B cell (primary cell): ENCODE measurements at regions of chr4 and their contacts with region 1.

Region 1: GRCh38 chr4:36244257-36245079 is at the start of gene ARAP2:
- DNase-seq: peak; percentile 88
- ATAC-seq: peak; percentile 81
- H3K4me3 ChIP-seq: peak within 1 kb of the TSS; percentile 79 to 96 (median 87)
- H3K4me3 Mint-ChIP-seq: peak within 1 kb of the TSS; percentile 96
- H3K27ac ChIP-seq: peak within 1 kb of the TSS; percentile 93 to 96
- H3K27ac Mint-ChIP-seq: peak within 1 kb of the TSS; percentile 95
- H3K4me1 ChIP-seq: peaks cover 18 to 22% of the 10 kb centered on the region in 2 donors
- H3K4me1 Mint-ChIP-seq: peaks cover 41% of the 10 kb centered on the region
- H3K27me3 ChIP-seq: no peaks in the 10 kb centered on the region
- H3K27me3 Mint-ChIP-seq: no peaks in the 10 kb centered on the region
- CTCF ChIP-seq: no peak
- total RNA-seq, gene ARAP2: 88.0 and 89.0 TPM in 2 replicates

Region 2: DNA sequence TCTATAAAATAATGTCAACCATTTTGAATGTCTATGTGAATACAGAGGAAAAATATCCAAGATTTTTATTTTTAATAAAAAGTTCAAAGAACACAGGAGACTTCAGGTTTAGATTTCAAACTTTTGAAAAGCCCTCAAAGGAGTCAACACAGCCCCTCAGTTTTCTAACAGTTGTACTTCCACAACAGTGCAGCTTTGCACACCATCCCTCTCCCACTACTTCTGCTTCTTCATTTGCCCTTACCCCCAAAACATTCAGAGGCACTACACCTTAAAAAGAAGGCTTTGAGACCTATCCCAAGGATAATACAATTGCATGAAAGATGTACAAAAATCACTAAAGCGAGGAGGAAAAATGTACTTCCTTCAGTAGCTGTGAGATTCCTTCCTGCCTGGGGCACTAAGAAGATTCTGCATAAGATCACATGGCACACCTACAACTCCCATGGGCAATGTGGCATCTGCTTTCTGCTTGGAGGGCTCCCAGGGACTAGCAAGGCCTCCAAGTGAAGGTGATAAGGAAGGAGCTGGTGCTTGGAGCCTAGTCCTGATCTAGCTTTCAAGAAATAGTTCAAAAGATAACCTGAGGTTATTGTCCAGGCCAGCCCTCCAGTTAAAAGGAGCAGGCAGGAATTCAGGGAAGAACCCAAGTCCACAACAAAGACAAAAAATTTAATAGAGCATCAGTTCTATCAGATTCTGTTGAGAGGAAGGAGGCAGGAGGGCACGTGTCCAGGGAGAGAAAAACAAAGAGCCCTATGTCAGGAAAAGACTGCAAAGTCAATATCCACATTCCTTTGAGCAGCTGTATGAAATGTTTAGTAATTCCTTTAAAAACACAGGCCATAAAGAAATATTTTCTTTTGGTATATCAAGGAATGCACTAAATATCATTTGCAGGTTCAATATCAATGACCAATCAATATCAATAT is 19.2 kb before region 1 on chr4:
- CTCF ChIA-PET with region 1: interaction called, 4 read pairs
- POLR2A ChIA-PET with region 1: no interaction called
- intact Hi-C with region 1: loop called (anchors 1 kb)
- DNase-seq: peak; percentile 36
- ATAC-seq: peak; percentile 64
- H3K4me3 ChIP-seq: no peak overlapping the region
- H3K4me3 Mint-ChIP-seq: peak overlapping the region; percentile 35
- H3K27ac ChIP-seq: peak overlapping the region; percentile 27 to 42
- H3K27ac Mint-ChIP-seq: peak overlapping the region; percentile 80
- H3K4me1 ChIP-seq: peaks cover 10 to 14% of the 10 kb centered on the region in 2 donors
- H3K4me1 Mint-ChIP-seq: peaks cover 57% of the 10 kb centered on the region
- H3K27me3 ChIP-seq: no peaks in the 10 kb centered on the region
- H3K27me3 Mint-ChIP-seq: no peaks in the 10 kb centered on the region
- CTCF ChIP-seq: no peak

Region 3: GRCh38 chr4:36255577-36255976 is 11.1 kb after region 1 on chr4:
- CTCF ChIA-PET with region 1: interaction called, 34 read pairs
- POLR2A ChIA-PET with region 1: interaction called, 16 read pairs
- intact Hi-C with region 1: loop called (anchors 1 kb)
- DNase-seq: peak; percentile 76
- ATAC-seq: peak; percentile 92
- H3K4me3 ChIP-seq: peak overlapping the region in 4 of 5 experiments; percentile 15 to 61 (median 18)
- H3K4me3 Mint-ChIP-seq: peak overlapping the region; percentile 78
- H3K27ac ChIP-seq: peak overlapping the region; percentile 13 to 80
- H3K27ac Mint-ChIP-seq: peak overlapping the region; percentile 93
- H3K4me1 ChIP-seq: peaks cover 22 to 26% of the 10 kb centered on the region in 2 donors
- H3K4me1 Mint-ChIP-seq: peaks cover 32% of the 10 kb centered on the region
- H3K27me3 ChIP-seq: no peaks in the 10 kb centered on the region
- H3K27me3 Mint-ChIP-seq: no peaks in the 10 kb centered on the region
- CTCF ChIP-seq: no peak

Region 4: GRCh38 chr4:36285784-36286480 is 41.5 kb after region 1 on chr4:
- CTCF ChIA-PET with region 1: no interaction called
- POLR2A ChIA-PET with region 1: no interaction called
- intact Hi-C with region 1: loop called (anchors 5 kb)
- DNase-seq: peak; percentile 43
- ATAC-seq: peak; percentile 96
- H3K4me3 ChIP-seq: peak overlapping the region in 1 of 5 experiments; percentile 1
- H3K4me3 Mint-ChIP-seq: peak overlapping the region; percentile 38
- H3K27ac ChIP-seq: no peak overlapping the region
- H3K27ac Mint-ChIP-seq: peak overlapping the region; percentile 43
- H3K4me1 ChIP-seq: peaks cover 4 to 9% of the 10 kb centered on the region in 2 donors
- H3K4me1 Mint-ChIP-seq: peaks cover 17% of the 10 kb centered on the region
- H3K27me3 ChIP-seq: peaks cover 0 to 4% (median 0%) of the 10 kb centered on the region in 4 experiments
- H3K27me3 Mint-ChIP-seq: no peaks in the 10 kb centered on the region
- CTCF ChIP-seq: no peak

Region 5: DNA sequence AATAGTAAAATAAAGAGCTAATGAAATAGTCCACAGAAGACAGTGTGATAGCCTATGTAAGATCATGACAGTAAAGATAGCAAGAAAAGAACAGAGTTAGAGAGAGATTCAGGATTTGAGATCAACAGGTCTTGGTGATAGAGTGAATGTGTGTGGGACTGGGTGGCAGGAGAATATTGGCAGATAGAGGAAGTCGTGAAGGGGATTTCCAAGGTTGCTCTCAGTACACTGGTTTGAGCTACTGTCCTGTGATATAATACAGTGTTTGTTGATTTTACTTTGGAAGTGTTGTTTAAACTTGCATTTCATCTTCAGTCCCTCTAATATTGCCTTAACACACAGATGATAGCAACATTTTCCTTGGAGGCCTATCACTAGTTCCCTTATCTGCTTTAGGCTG is 81.0 kb after region 1 on chr4:
- CTCF ChIA-PET with region 1: interaction called, 9 read pairs
- POLR2A ChIA-PET with region 1: interaction called, 8 read pairs
- intact Hi-C with region 1: loop called (anchors 2 kb)
- DNase-seq: peak; percentile 81
- ATAC-seq: peak; percentile 89
- H3K4me3 ChIP-seq: peak overlapping the region in 2 of 5 experiments; percentile 7 to 44
- H3K4me3 Mint-ChIP-seq: peak overlapping the region; percentile 69
- H3K27ac ChIP-seq: peak overlapping the region; percentile 76 to 85
- H3K27ac Mint-ChIP-seq: peak overlapping the region; percentile 90
- H3K4me1 ChIP-seq: peaks cover 44 to 49% of the 10 kb centered on the region in 2 donors
- H3K4me1 Mint-ChIP-seq: peaks cover 68% of the 10 kb centered on the region
- H3K27me3 ChIP-seq: no peaks in the 10 kb centered on the region
- H3K27me3 Mint-ChIP-seq: no peaks in the 10 kb centered on the region
- CTCF ChIP-seq: no peak

Region 6: GRCh38 chr4:36351082-36351666 is 106.7 kb after region 1 on chr4:
- CTCF ChIA-PET with region 1: interaction called, 29 read pairs
- POLR2A ChIA-PET with region 1: interaction called, 3 read pairs
- intact Hi-C with region 1: loop called (anchors 1 kb)
- DNase-seq: peak; percentile 77
- ATAC-seq: peak; percentile 53
- H3K4me3 ChIP-seq: no peak overlapping the region
- H3K4me3 Mint-ChIP-seq: no peak overlapping the region
- H3K27ac ChIP-seq: no peak overlapping the region
- H3K27ac Mint-ChIP-seq: no peak overlapping the region
- H3K4me1 ChIP-seq: peaks cover 15 to 19% of the 10 kb centered on the region in 2 donors
- H3K4me1 Mint-ChIP-seq: peaks cover 21% of the 10 kb centered on the region
- H3K27me3 ChIP-seq: no peaks in the 10 kb centered on the region
- H3K27me3 Mint-ChIP-seq: peaks cover 3% of the 10 kb centered on the region
- CTCF ChIP-seq: peak; percentile 91

Region 7: DNA sequence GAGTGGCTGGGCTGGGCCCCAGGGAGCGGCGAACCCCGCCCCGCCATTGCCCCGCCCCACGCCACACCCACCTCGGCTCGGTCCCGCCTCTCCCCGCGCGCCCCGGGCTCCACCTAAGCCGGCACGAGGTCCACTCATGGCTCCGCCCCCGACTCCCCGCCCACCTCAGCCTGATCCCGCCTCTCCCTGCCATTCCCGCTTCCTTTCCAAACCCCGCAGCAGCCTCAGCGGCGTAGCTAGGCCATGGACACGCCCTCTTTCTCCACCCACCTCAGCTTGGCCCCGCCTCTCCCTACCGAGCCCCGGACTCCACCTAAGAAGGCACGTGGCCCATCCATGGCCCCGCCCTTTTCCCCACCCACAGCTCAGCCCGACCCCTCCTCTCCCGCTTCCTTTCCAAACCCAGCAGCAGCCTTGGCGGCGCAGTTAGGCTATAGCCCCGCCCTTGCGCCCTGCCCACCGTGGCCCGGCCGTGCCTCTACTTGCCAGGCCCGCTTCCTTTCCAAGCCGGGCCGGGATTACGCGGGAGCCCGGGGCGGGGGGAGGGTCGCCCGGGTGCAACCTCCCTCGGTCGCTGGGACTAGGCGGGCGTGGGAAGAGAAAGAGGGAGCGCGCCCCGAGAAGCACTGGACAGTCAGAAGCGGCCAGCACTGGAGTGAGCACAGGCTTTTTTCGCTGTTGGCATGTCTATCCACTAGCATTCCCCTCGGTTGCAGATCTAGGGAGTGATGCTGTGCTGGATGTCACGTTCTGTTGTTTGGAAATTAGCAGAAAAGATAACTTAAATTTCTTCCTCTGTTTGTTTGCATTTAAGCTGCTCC is 1442.1 kb after region 1 on chr4 and contains the start of gene RELL1:
- CTCF ChIA-PET with region 1: no interaction called
- POLR2A ChIA-PET with region 1: no interaction called
- intact Hi-C with region 1: loop called (anchors 10 kb)
- DNase-seq: peak; percentile 96
- ATAC-seq: peak; percentile 85
- H3K4me3 ChIP-seq: peak within 1 kb of the TSS; percentile 66 to 86 (median 81)
- H3K4me3 Mint-ChIP-seq: peak within 1 kb of the TSS; percentile 92
- H3K27ac ChIP-seq: peak within 1 kb of the TSS; percentile 45 to 70
- H3K27ac Mint-ChIP-seq: peak within 1 kb of the TSS; percentile 89
- H3K4me1 ChIP-seq: peaks cover 31% of the 10 kb centered on the region in 2 donors
- H3K4me1 Mint-ChIP-seq: peaks cover 31% of the 10 kb centered on the region
- H3K27me3 ChIP-seq: peaks cover 0 to 12% (median 4%) of the 10 kb centered on the region in 4 experiments
- H3K27me3 Mint-ChIP-seq: peaks cover 12% of the 10 kb centered on the region
- CTCF ChIP-seq: no peak
- total RNA-seq, gene RELL1: 2.7 and 3.2 TPM in 2 replicates